RWPE1 (cell line): ENCODE measurements at regions of chr6 and their contacts with region 1.

Region 1: DNA sequence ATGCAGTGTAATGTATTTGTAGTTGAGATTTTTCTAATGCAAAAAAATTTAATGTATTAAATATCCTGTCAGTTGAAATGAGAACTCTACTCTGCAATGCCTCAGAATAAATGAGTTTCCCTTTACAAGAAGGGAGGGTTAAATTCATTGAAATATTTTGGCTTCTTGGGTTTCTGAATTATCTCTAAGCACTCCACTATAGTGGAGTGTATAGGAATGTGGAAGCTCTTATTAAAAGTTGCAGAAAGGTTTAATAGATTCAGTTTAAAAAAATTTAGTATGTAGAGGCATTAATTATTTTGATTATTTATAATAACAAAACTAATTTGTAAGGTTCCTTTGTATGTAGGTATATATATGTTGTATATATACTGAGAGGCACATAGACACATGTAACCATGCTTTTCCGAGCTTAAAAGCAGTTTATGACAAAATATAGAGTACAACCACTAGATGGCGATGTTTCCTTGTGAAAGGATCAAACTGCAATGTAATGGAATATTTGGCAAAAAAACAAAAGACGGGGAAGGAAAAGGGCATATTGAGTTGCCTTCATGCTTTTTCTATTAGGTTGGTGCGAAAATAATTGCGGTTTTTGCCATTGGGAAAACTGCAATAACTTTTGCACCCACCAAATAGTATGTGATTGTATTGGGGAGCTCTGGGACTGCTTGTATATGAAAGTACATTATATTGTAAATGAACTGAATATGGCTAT is 144.2 kb downstream of the MYO6 start:
- DNase-seq: peak; percentile 22
- H3K27ac ChIP-seq: no peak overlapping the region
- CTCF ChIP-seq: peak; percentile 69

Region 2: DNA sequence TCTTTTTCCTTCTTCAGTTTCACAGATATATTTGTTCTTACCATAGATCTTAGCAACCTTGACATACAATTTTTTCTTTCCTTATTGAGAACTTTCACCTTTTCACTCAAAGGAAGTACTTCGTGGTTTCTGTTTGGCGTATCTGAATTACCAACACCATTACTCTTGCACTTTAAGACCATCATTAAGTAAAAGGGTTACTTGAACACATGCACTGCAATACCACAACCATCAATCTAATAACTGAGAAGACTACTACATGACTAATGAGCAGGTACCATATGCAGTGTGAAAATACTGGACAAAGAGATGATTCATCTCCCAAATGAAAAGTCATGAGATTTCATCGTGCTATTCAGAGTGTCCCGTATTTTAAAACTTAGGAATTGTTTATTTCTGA is 313.3 kb before region 1 on chr6:
- CTCF ChIA-PET with region 1: no interaction called
- POLR2A ChIA-PET with region 1: no interaction called
- DNase-seq: no peak
- H3K27ac ChIP-seq: no peak overlapping the region
- CTCF ChIP-seq: no peak

Region 3: GRCh38 chr6:75824160-75824559 is 69.1 kb before region 1 on chr6:
- CTCF ChIA-PET with region 1: no interaction called
- POLR2A ChIA-PET with region 1: no interaction called
- DNase-seq: no peak
- H3K27ac ChIP-seq: no peak overlapping the region
- CTCF ChIP-seq: no peak

Region 4: GRCh38 chr6:75876152-75876551 is 17.1 kb before region 1 on chr6:
- CTCF ChIA-PET with region 1: interaction called, 12 read pairs
- POLR2A ChIA-PET with region 1: no interaction called
- DNase-seq: no peak
- H3K27ac ChIP-seq: no peak overlapping the region
- CTCF ChIP-seq: no peak

Region 5: DNA sequence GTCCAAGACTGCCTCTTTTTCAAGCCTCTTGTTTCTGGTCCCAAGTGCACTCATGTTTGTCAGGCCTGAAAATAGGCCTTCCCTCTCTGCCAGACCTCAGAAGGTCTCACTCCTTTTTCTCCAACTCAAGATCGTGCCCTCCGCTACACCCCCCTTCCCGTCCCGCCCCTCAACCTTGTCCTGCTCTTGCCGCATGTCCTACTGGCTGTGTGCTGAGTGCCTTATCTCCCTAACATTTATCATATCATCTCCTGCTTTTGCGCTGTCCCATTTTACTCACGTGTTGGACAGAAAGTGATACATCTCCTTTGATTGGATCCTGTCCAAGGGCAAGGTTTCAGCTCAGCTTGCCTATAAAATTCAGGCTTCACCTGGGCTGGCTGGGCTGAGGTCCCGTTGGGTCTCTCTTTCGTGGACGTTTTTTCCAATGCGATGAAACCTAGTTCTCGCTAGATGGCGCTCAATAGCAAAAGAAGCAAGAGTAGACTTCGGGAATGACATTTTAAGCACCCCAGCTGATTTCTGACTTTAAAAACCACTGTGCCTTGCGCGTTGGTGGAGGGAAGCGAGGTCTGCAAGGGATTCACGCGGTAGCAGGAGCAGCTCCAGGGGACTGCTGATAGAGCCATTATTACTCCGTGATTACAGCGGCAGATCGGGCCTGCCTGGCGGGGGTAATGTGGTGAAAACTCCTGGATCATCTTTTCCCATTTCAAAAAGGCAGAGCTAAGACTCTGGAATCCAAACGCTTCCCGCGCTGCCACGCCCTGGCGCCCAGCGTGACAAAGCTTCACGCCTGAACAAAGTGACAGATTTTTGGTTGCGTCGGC is 41.6 kb after region 1 on chr6:
- CTCF ChIA-PET with region 1: interaction called, 11 read pairs
- POLR2A ChIA-PET with region 1: no interaction called
- DNase-seq: peak; percentile 74
- H3K27ac ChIP-seq: no peak overlapping the region
- CTCF ChIP-seq: peak; percentile 78

Region 6: GRCh38 chr6:76043690-76044089 is 150.5 kb after region 1 on chr6:
- CTCF ChIA-PET with region 1: no interaction called
- POLR2A ChIA-PET with region 1: no interaction called
- DNase-seq: no peak
- H3K27ac ChIP-seq: no peak overlapping the region
- CTCF ChIP-seq: no peak